Vagina (tissue), 2 donors: ENCODE measurements at regions of chr16 and their contacts with region 1.

Region 1: DNA sequence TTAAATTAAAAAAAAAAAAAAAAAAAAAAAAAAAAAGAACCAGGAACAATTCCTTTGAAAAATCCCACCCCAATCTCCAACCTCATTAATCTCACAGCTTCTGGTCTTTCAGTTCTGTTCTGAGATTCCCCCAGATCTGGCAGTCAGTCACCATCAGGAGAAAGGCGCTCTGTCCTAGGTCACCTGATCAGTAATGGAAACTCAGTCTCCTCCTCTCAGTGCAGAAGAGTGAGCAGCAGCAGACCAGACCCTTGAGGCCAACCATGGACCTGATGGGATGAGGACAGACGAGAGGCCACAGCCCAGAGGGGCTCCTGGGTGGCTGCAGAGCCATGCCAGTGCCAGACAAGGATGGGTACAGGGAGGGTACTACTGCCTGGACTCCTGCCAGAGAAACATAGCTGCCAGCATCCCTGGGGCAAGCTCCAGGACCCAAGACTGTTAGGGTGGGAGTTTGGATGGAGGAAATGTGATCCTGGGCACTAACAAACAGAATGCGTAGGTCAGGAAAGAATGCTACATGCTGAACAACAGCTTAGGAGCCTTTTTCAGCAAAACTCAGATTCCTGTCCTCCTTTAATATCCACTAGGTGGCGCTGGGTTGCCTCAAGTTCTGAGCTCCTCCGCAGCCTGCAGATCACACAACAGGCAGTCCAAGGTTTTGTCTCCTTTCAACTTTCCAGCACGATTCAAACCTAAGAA is 28.7 kb downstream of the MPG start:
- DNase-seq: no peak
- H3K4me3 ChIP-seq: no peak overlapping the region
- H3K27ac ChIP-seq: no peak overlapping the region
- H3K4me1 ChIP-seq: peaks cover 13% of the 10 kb centered on the region
- H3K27me3 ChIP-seq: no peaks in the 10 kb centered on the region
- CTCF ChIP-seq: peak; percentile 69 to 73 (median 70)
- POLR2A ChIP-seq: no peak

Region 2: GRCh38 chr16:180938-181667 is 74.3 kb after region 1 on chr16:
- intact Hi-C with region 1: loop called (anchors 5 kb)
- DNase-seq: no peak
- H3K4me3 ChIP-seq: peak overlapping the region; percentile 20 to 35
- H3K27ac ChIP-seq: no peak overlapping the region
- H3K4me1 ChIP-seq: peaks cover 24% of the 10 kb centered on the region
- H3K27me3 ChIP-seq: peaks cover 12% of the 10 kb centered on the region
- CTCF ChIP-seq: peak; percentile 87 to 93 (median 89)
- POLR2A ChIP-seq: no peak

Region 3: GRCh38 chr16:212999-213398 is 106.2 kb after region 1 on chr16:
- intact Hi-C with region 1: no loop called
- DNase-seq: no peak
- H3K4me3 ChIP-seq: no peak overlapping the region
- H3K27ac ChIP-seq: no peak overlapping the region
- H3K4me1 ChIP-seq: no peaks in the 10 kb centered on the region
- H3K27me3 ChIP-seq: no peaks in the 10 kb centered on the region
- CTCF ChIP-seq: no peak
- POLR2A ChIP-seq: no peak